HepG2 (cell line): ENCODE measurements at regions of chr2 and their contacts with region 1.

Region 1: GRCh38 chr2:69914170-69914960 is 544 bp upstream of the MXD1 start:
- DNase-seq: peak; percentile 100
- ATAC-seq: peak; percentile 92
- H3K4me3 ChIP-seq: peak overlapping the region; percentile 56 to 69 (median 58)
- H3K27ac ChIP-seq: peak overlapping the region; percentile 89
- H3K4me1 ChIP-seq: peaks cover 37% of the 10 kb centered on the region
- H3K27me3 ChIP-seq: no peaks in the 10 kb centered on the region
- CTCF ChIP-seq: peak; percentile 96
- EP300 ChIP-seq: peak in 1 of 2 experiments; percentile 19; a peak in 2 of 4 replicates
- POLR2A ChIP-seq: peak; percentile 90 to 94
- RAD21 ChIP-seq: peak; percentile 91

Region 2: GRCh38 chr2:69858261-69858660 is 56.1 kb before region 1 on chr2:
- CTCF ChIA-PET with region 1: no interaction called
- POLR2A ChIA-PET with region 1: no interaction called
- in situ Hi-C with region 1: no loop called
- intact Hi-C with region 1: no loop called
- DNase-seq: no peak
- ATAC-seq: no peak
- H3K4me3 ChIP-seq: no peak overlapping the region
- H3K27ac ChIP-seq: no peak overlapping the region
- H3K4me1 ChIP-seq: no peaks in the 10 kb centered on the region
- H3K27me3 ChIP-seq: no peaks in the 10 kb centered on the region
- CTCF ChIP-seq: no peak
- EP300 ChIP-seq: no peak
- POLR2A ChIP-seq: no peak
- RAD21 ChIP-seq: no peak

Region 3: DNA sequence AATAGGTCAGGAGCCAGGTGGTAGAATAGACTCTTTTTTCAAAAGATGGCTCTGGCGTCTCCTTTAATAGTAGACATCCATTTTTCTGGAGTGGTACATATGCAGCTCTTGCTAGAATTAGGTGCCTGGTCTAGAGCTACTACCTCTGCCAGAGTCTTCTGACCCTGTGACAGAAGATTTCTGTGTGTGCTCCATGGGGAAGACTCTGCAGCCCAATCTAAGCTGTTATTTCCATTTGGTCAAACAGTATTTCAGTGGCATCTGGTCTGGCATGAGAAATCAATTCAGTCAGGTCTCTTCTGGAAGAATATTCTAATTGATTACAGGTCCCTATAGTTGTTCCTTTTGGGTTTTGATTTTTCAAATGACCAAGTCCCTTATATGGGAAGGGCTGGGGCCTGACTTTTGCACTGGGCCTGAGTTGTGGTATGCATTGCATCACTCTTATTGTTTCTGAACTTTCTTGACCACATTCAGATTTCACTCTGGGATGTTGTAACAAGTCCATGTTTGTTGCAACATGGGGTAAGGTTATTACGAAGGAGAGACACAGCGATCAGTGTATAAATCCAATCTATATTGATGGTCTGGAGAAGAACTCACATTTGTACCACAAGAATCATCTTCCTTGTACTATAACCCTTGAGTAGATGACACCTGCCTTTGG is 12.6 kb after region 1 on chr2:
- CTCF ChIA-PET with region 1: no interaction called
- POLR2A ChIA-PET with region 1: interaction called, 104 read pairs
- in situ Hi-C with region 1: no loop called
- intact Hi-C with region 1: no loop called
- DNase-seq: peak; percentile 86
- ATAC-seq: peak; percentile 94
- H3K4me3 ChIP-seq: no peak overlapping the region
- H3K27ac ChIP-seq: peak overlapping the region; percentile 59
- H3K4me1 ChIP-seq: peaks cover 24% of the 10 kb centered on the region
- H3K27me3 ChIP-seq: no peaks in the 10 kb centered on the region
- CTCF ChIP-seq: 0 out of 2 replicates have a peak, but pooled peaks have one; percentile 3
- EP300 ChIP-seq: peak; percentile 89; a peak in 3 of 4 replicates
- POLR2A ChIP-seq: no peak
- RAD21 ChIP-seq: 0 out of 2 replicates have a peak, but pooled peaks have one; percentile 14

Region 4: DNA sequence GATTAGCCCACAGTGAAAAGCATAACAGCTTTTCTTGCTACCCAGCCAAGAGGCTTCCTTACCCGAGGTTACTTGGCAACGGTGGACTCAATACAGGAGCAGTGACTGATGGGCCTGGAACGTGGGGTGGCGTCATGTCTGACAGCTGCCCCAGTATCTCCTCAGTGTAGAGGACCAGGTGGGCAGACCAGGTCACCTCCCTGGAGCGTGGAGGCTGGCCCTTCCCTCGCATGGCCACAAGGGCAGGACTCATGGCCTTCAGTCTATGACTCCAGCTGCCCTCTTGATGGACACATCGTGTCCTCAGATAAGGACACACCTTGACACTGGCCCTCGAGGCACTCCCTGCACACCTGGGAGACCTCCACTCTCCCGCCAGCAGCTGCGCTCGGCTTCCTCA is 40.7 kb after region 1 on chr2:
- CTCF ChIA-PET with region 1: no interaction called
- POLR2A ChIA-PET with region 1: interaction called, 20 read pairs
- in situ Hi-C with region 1: no loop called
- intact Hi-C with region 1: no loop called
- DNase-seq: peak; percentile 26
- ATAC-seq: peak; percentile 83
- H3K4me3 ChIP-seq: no peak overlapping the region
- H3K27ac ChIP-seq: no peak overlapping the region
- H3K4me1 ChIP-seq: peaks cover 31% of the 10 kb centered on the region
- H3K27me3 ChIP-seq: peaks cover 0 to 25% of the 10 kb centered on the region in 2 experiments; a peak in 2 of 5 replicates
- CTCF ChIP-seq: no peak
- EP300 ChIP-seq: no peak
- POLR2A ChIP-seq: no peak
- RAD21 ChIP-seq: no peak

Region 5: DNA sequence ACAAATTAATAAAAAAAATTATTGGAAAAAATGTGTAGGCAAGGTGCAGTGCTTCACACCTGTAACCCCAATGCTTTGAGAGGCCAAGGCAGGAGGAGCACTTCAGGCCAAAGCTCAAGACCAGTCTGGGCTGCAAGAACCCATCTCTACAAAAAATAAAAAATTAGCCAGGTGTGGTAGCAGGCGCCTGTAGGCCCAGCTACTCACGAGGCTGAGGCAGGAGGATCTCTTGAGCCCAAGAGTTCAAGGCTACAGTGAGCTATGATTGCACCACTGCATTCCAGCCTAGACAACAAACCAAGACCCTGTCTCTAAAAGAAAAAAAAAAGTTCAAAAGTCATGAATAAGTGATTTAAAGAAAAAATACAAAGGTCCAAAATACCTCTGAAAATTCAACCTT is 136.3 kb after region 1 on chr2:
- CTCF ChIA-PET with region 1: no interaction called
- POLR2A ChIA-PET with region 1: interaction called, 11 read pairs
- in situ Hi-C with region 1: no loop called
- intact Hi-C with region 1: loop called (anchors 1 kb)
- DNase-seq: peak; percentile 81
- ATAC-seq: peak; percentile 71
- H3K4me3 ChIP-seq: no peak overlapping the region
- H3K27ac ChIP-seq: peak overlapping the region; percentile 66
- H3K4me1 ChIP-seq: peaks cover 17% of the 10 kb centered on the region
- H3K27me3 ChIP-seq: no peaks in the 10 kb centered on the region
- CTCF ChIP-seq: no peak
- EP300 ChIP-seq: peak in 1 of 2 experiments; percentile 76; a peak in 2 of 4 replicates
- POLR2A ChIP-seq: no peak
- RAD21 ChIP-seq: 0 out of 2 replicates have a peak, but pooled peaks have one; percentile 13

Region 6: GRCh38 chr2:70094978-70095719 is 180.8 kb after region 1 on chr2:
- CTCF ChIA-PET with region 1: no interaction called
- POLR2A ChIA-PET with region 1: interaction called, 282 read pairs
- in situ Hi-C with region 1: no loop called
- intact Hi-C with region 1: no loop called
- DNase-seq: peak; percentile 87
- ATAC-seq: peak; percentile 73
- H3K4me3 ChIP-seq: peak overlapping the region; percentile 36 to 67 (median 50)
- H3K27ac ChIP-seq: peak overlapping the region; percentile 73
- H3K4me1 ChIP-seq: peaks cover 46% of the 10 kb centered on the region
- H3K27me3 ChIP-seq: no peaks in the 10 kb centered on the region
- CTCF ChIP-seq: no peak
- EP300 ChIP-seq: peak in 1 of 2 experiments; percentile 51; a peak in 2 of 4 replicates
- POLR2A ChIP-seq: peak; percentile 24 to 48; a peak in 1 of 4 replicates
- RAD21 ChIP-seq: no peak; the same call in 1 of the 2 replicates

Region 7: DNA sequence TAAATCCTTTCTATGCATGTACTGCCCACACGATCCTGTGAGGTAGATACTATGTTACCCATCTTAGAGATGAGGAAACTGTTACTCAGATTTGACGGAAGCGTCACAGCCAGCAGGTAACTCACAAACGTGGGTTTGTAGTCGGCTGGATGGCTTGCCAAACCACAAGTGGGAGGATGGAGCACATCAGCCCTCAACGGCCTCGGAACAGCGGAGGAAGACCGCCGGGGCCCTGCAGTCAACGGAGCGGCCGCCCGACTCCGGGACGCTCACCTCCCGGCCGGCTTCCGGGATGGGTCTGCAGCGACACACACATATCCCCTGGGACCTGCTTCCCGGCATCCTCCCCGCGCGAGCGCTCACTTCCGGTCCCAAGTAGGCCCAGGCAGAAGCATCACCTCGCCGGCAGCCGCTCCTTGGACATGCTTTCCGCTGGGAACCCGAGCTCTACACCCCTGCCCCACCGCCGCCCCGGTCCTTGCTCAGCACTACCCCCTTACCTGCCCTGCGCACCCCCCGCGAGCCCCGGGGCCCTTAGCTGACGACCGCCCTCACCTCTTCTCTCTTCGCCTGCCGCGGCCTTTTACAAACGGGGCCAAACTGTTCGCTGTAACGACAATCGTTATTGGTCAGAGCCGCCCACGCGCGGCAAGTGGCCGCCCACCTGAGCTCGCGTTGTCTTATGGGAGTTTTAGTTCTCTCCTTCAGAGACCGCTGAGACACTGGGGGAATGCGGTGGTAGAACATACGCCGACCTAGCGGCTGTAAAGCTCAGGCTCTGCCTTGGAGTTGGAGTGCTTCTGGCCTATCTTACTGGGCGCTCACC is 276.3 kb after region 1 on chr2 and contains the start of gene C2orf42:
- CTCF ChIA-PET with region 1: no interaction called
- POLR2A ChIA-PET with region 1: interaction called, 49 read pairs
- in situ Hi-C with region 1: no loop called
- intact Hi-C with region 1: loop called (anchors 5 kb)
- DNase-seq: peak; percentile 98
- ATAC-seq: peak; percentile 96
- H3K4me3 ChIP-seq: peak within 1 kb of the TSS; percentile 69 to 88 (median 86)
- H3K27ac ChIP-seq: peak within 1 kb of the TSS; percentile 83
- H3K4me1 ChIP-seq: peaks cover 36% of the 10 kb centered on the region
- H3K27me3 ChIP-seq: no peaks in the 10 kb centered on the region; a peak in 1 of 5 replicates
- CTCF ChIP-seq: peak; percentile 54
- EP300 ChIP-seq: 0 out of 4 replicates have a peak, but pooled peaks of 1 of the 2 experiments have one; percentile 60
- POLR2A ChIP-seq: peak; percentile 96 to 99
- RAD21 ChIP-seq: peak; percentile 29
- total RNA-seq, gene C2orf42: 9.9 and 11.1 TPM in 2 replicates

Region 8: GRCh38 chr2:70553584-70554337 is 639.4 kb after region 1 on chr2 and contains the start of gene TGFA:
- CTCF ChIA-PET with region 1: no interaction called
- POLR2A ChIA-PET with region 1: interaction called, 3 read pairs
- in situ Hi-C with region 1: no loop called
- intact Hi-C with region 1: loop called (anchors 2 kb)
- DNase-seq: peak; percentile 91
- ATAC-seq: peak; percentile 84
- H3K4me3 ChIP-seq: peak within 1 kb of the TSS; percentile 70 to 91 (median 75)
- H3K27ac ChIP-seq: peak within 1 kb of the TSS; percentile 76
- H3K4me1 ChIP-seq: peaks cover 58% of the 10 kb centered on the region
- H3K27me3 ChIP-seq: no peaks in the 10 kb centered on the region; a peak in 1 of 5 replicates
- CTCF ChIP-seq: peak; percentile 90
- EP300 ChIP-seq: no peak
- POLR2A ChIP-seq: peak; percentile 74 to 75
- RAD21 ChIP-seq: peak; percentile 96
- total RNA-seq, gene TGFA: 12.5 and 15.3 TPM in 2 replicates